Mammary epithelial cell (primary cell): ENCODE measurements at regions of chr10 and their contacts with region 1.

Region 1: GRCh38 chr10:30687698-30688219 is 58.2 kb upstream of the LYZL2 start:
- DNase-seq: peak; percentile 65
- H3K4me3 ChIP-seq: no peak overlapping the region
- H3K27ac ChIP-seq: no peak overlapping the region
- H3K4me1 ChIP-seq: no peaks in the 10 kb centered on the region
- H3K27me3 ChIP-seq: no peaks in the 10 kb centered on the region
- CTCF ChIP-seq: peak; percentile 91 to 95

Region 2: DNA sequence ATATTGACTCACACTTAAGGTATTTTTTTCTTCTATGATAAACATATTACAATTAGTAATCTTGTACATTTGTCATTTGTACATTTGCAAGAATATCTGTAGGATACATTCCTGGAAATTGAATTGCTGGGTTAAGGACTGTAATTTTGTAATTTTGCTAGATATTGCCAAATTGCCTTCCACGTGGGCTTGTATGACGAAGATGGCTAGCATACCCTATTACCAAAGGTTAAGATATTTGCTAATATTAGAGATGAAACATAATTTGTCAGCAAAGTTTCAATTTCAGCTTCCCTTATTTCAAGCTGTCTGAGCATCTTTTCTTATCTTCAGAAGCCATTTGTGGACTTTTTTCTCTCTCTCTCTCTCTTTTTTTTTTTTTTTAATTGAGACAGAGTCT is 57.2 kb before region 1 on chr10:
- CTCF ChIA-PET with region 1: no interaction called
- dilution Hi-C with region 1: no loop called
- in situ Hi-C with region 1: no loop called
- intact Hi-C with region 1: no loop called
- DNase-seq: no peak
- H3K4me3 ChIP-seq: no peak overlapping the region
- H3K27ac ChIP-seq: no peak overlapping the region
- H3K4me1 ChIP-seq: no peaks in the 10 kb centered on the region
- H3K27me3 ChIP-seq: peaks cover 2% of the 10 kb centered on the region
- CTCF ChIP-seq: no peak

Region 3: GRCh38 chr10:30645340-30645827 is 42.4 kb before region 1 on chr10:
- CTCF ChIA-PET with region 1: no interaction called
- dilution Hi-C with region 1: no loop called
- in situ Hi-C with region 1: no loop called
- intact Hi-C with region 1: no loop called
- DNase-seq: peak; percentile 41
- H3K4me3 ChIP-seq: no peak overlapping the region
- H3K27ac ChIP-seq: no peak overlapping the region
- H3K4me1 ChIP-seq: no peaks in the 10 kb centered on the region
- H3K27me3 ChIP-seq: peaks cover 8% of the 10 kb centered on the region
- CTCF ChIP-seq: no peak

Region 4: GRCh38 chr10:30671026-30671616 is 16.6 kb before region 1 on chr10:
- CTCF ChIA-PET with region 1: no interaction called
- dilution Hi-C with region 1: no loop called
- in situ Hi-C with region 1: no loop called
- intact Hi-C with region 1: loop called (anchors 2 kb)
- DNase-seq: peak; percentile 57
- H3K4me3 ChIP-seq: peak overlapping the region in 2 of 3 experiments; percentile 29 to 46
- H3K27ac ChIP-seq: no peak overlapping the region
- H3K4me1 ChIP-seq: no peaks in the 10 kb centered on the region
- H3K27me3 ChIP-seq: peaks cover 3% of the 10 kb centered on the region
- CTCF ChIP-seq: peak; percentile 69 to 73